ENCODE measurements at regions of chr2 and their contacts with region 1.

Region 1: GRCh38 chr2:10832203-10832936 is 19.8 kb upstream of the PDIA6 start:
- DNase-seq: peak; percentile 91
- ATAC-seq: peak; percentile 91

Region 2: DNA sequence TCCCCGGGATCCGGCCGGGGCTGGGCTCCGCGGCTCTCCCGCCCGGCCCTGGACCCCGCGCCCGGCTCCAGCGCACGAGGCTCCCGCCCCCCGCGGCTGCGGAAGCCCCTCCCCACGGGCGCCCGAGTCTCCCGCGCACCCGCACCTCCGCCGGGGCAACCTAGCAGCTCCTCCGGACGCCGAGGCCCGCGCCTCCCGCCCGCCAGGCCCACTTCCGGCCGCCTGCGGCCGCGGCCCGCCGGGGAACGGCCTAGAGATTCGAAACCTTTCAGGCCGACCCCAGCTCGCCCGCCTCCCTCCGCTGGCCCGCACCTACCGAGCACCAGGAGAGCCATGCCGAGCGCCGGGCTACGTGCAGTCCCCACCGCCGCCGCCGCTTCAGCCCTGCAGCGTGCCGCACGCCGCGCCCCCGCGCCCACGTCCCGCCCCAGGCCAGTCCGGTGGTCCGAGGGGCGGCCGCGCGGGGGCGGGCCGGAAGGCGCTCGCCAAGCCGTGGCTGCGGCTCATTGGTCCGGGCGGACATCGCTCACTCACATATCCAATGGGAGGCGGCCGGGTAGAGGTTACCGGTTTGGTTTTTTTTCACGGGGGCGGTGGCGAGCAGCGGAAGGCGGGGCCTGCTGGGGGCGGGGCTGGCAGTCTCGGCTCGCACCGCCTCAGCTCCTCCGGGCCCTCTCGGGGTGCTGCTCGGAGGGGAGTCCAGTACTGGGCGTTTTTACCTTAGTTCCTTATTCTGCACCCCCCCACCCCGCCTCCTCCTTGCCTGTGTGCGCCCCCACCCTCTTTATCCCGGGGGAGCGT is 19.8 kb before region 1 on chr2 and contains the start of gene PDIA6:
- intact Hi-C with region 1: no loop called
- DNase-seq: peak; percentile 99
- ATAC-seq: peak; percentile 98
- total RNA-seq, gene PDIA6: 95.4 TPM

Region 3: DNA sequence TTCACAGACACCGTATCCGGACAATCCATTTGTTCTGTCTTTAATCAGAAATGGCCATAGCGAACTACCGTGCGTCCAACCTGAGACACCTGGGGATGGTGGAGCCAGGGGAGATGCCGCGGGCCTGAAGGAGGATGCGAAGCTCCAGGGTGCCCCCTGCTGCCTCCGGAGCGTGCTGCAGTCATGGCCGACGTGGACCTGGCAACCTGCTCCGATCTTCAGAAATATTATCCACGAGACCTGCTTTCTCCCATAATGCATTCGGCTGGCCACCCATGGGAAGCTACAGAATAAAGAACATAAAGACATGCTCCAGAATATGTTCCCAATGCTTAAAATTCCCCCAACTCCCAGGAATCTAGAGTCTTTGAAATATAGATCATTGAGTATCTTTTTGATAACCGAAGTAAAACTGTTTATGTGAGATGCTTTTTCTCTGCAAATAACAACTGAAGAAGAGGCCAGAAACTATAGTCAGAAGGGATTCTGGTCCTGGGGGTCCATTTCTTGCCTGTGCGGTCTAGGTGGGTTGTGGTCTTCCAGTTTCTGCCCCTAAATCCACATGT is 292.2 kb after region 1 on chr2:
- intact Hi-C with region 1: loop called (anchors 5 kb)
- DNase-seq: peak; percentile 77
- ATAC-seq: peak; percentile 38

Region 4: DNA sequence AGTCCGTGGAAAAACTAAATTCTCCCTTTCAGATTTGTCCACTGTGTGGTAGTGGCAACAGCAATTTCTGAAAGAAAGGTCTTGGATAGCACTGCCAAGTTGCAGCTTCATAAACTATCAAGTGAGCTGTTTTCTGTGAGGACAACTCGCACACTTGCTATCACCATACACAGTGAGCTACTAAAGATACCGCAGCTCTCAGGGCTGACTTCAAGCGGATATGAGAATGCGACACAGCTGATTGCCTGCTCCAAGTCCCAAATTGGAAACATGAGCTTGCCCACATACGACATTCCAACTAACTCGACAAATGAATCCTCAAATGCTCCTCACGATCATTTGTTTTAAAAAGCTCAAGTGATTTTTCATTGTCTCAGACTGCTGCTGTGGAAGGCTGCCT is 587.4 kb after region 1 on chr2:
- intact Hi-C with region 1: loop called (anchors 10 kb)
- DNase-seq: no peak
- ATAC-seq: peak; percentile 59